ENCODE measurements at regions of chr7 and their contacts with region 1.

Region 1: GRCh38 chr7:143240291-143241168 is 18.7 kb downstream of the TAS2R40 start:
- DNase-seq: no peak
- H3K4me3 ChIP-seq: peak overlapping the region in 1 of 8 donors; percentile 27
- H3K27ac ChIP-seq: peak overlapping the region; percentile 39 to 93 (median 78)
- H3K4me1 ChIP-seq: peaks cover 0 to 50% (median 21%) of the 10 kb centered on the region in 6 donors
- H3K27me3 ChIP-seq: peaks cover 0 to 5% (median 0%) of the 10 kb centered on the region in 7 donors
- CTCF ChIP-seq: peak; percentile 79 to 97 (median 93)
- POLR2A ChIP-seq: no peak

Region 2: DNA sequence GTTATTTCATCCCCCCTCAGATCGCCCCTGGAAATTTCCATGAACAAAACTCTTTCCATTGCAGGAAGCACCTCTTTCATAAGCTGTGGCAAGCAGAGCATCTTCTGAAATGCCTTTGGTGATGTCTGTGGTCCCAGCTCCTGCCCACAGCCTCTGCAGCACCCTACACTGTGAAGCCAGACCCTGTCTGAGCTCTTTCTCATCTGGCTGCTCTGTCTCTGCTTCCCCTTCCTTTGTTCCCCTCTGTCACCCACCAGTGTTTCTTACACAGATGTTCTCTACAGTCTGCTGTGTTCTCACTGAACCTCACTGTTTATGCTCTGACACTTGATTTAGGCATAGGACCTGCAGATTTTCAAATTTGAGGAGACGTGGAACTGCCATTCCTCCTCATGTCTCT is 59.2 kb before region 1 on chr7:
- intact Hi-C with region 1: no loop called
- DNase-seq: no peak
- H3K4me3 ChIP-seq: no peak overlapping the region
- H3K27ac ChIP-seq: peak overlapping the region in 2 of 8 donors; percentile 13 to 24
- H3K4me1 ChIP-seq: peaks cover 0 to 16% (median 0%) of the 10 kb centered on the region in 6 donors
- H3K27me3 ChIP-seq: no peaks in the 10 kb centered on the region
- CTCF ChIP-seq: no peak
- POLR2A ChIP-seq: no peak

Region 3: GRCh38 chr7:143299840-143300239 is 59.3 kb after region 1 on chr7:
- intact Hi-C with region 1: loop called (anchors 5 kb)
- DNase-seq: no peak
- H3K4me3 ChIP-seq: no peak overlapping the region
- H3K27ac ChIP-seq: peak overlapping the region in 5 of 8 donors; percentile 11 to 84 (median 75)
- H3K4me1 ChIP-seq: peaks cover 0 to 63% (median 30%) of the 10 kb centered on the region in 6 donors
- H3K27me3 ChIP-seq: no peaks in the 10 kb centered on the region
- CTCF ChIP-seq: peak in 10 of 11 experiments; percentile 21 to 75 (median 60)
- POLR2A ChIP-seq: no peak

Region 4: DNA sequence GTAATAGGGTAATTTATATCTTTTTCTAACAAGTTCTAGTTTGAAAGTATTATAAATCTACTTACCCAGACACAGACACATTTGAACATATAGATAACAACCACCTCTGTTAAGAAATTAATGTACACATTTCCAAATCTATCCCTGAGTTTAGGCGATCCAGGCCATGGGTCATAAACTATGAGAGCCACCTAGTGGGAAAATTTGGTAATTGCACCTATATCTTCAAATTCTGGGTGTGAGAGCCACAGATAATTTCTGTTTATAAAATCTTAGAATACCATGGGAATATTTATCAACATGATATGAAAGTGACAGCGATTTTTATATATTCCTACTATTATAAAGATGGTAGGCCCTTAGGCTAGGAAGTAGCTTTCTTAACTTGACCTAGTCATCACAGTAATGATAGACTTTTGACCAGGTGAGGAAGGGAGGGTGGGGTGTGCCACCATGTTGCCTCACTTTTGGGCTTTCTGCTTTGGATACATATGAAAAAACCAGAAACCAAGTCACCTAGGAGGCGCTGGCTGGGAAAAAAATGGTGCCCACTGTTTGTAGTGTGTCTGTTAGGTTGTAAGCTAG is 176.1 kb after region 1 on chr7:
- intact Hi-C with region 1: loop called (anchors 2 kb)
- DNase-seq: no peak
- H3K4me3 ChIP-seq: no peak overlapping the region
- H3K27ac ChIP-seq: no peak overlapping the region
- H3K4me1 ChIP-seq: peaks cover 0 to 23% (median 2%) of the 10 kb centered on the region in 6 donors
- H3K27me3 ChIP-seq: peaks cover 0 to 42% (median 0%) of the 10 kb centered on the region in 7 donors
- CTCF ChIP-seq: peak; percentile 58 to 85 (median 78)
- POLR2A ChIP-seq: no peak

Measured in spleen (tissue), 13 donors.